PC-3 (cell line): ENCODE measurements at regions of chr5 and their contacts with region 1.

Region 1: DNA sequence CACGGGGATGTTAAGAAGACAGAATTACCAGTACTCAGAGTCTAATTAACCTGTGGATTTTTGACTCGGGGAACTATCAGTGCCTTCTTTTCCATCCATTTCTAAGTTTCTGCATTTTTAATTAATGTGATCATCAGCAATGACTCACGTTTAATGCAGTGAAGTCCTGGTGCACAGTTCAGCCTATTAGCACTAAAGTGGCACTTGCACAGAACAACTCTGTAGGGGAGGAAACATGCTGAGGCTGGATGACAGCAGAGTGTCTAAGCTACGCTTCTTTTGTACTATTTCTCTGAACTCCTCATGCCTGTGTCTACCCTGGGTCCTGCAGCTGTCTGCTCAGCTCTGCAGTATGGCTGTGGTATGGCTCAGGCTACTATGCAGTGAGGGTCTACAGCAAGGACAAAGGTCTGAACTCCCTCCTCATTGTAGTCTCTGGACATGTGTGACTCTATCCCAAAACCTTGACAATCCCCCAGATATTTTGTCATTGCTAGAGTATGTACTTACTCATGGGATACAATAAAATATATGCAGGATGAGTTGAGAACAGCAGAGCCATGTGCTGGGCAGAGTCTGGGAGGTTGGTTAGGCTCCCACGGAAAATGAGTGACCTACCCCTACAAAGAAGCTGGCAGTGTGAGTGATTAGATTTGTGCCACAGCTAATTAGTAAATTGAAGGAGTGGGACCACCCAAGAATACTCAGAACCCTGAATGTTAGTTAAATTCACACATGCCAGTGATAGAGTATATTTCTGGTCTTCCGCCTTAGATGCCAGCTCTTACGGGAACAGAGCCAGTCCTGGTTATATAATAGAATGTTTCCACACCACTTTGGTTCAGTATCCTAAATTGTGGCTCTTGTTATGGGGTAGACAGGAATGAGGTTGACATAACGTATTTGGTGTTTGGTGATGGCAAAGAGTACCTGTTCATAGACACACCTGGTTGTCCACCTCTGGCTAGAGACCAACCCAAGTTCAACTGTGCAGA is 148.0 kb downstream of the GHR start:
- DNase-seq: peak; percentile 50
- ATAC-seq: peak; percentile 93
- H3K4me3 ChIP-seq: no peak overlapping the region
- H3K27ac ChIP-seq: no peak overlapping the region
- H3K4me1 ChIP-seq: peaks cover 7% of the 10 kb centered on the region
- H3K27me3 ChIP-seq: no peaks in the 10 kb centered on the region
- CTCF ChIP-seq: no peak

Region 2: GRCh38 chr5:42216904-42217303 is 354.4 kb before region 1 on chr5:
- CTCF ChIA-PET with region 1: no interaction called
- POLR2A ChIA-PET with region 1: no interaction called
- intact Hi-C with region 1: no loop called
- DNase-seq: no peak
- ATAC-seq: no peak
- H3K4me3 ChIP-seq: no peak overlapping the region
- H3K27ac ChIP-seq: no peak overlapping the region
- H3K4me1 ChIP-seq: no peaks in the 10 kb centered on the region
- H3K27me3 ChIP-seq: no peaks in the 10 kb centered on the region
- CTCF ChIP-seq: no peak

Region 3: DNA sequence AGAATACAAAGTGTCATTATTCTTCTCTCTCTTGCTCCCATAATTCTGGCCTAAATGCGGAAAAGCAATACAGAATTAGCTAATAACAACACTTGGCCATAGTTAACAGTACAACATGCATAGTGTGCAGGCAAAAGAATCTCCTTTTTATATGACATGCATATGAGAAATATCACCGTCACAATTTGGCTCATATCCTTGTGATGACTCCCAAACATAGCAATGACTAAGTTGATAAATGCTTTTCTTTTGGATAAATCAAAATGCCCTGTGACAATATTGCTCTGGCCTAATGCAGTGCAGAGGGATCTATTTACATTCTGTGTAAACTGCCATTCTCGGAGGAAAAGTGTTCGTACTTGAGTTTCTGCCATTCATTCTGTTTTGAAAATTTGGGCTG is 269.9 kb before region 1 on chr5:
- CTCF ChIA-PET with region 1: no interaction called
- POLR2A ChIA-PET with region 1: no interaction called
- intact Hi-C with region 1: loop called (anchors 10 kb)
- DNase-seq: peak; percentile 98
- ATAC-seq: peak; percentile 90
- H3K4me3 ChIP-seq: peak overlapping the region; percentile 26
- H3K27ac ChIP-seq: peak overlapping the region; percentile 79
- H3K4me1 ChIP-seq: peaks cover 28% of the 10 kb centered on the region
- H3K27me3 ChIP-seq: no peaks in the 10 kb centered on the region
- CTCF ChIP-seq: no peak

Region 4: GRCh38 chr5:42500003-42500599 is 71.2 kb before region 1 on chr5:
- CTCF ChIA-PET with region 1: no interaction called
- POLR2A ChIA-PET with region 1: no interaction called
- intact Hi-C with region 1: loop called (anchors 2 kb)
- DNase-seq: peak; percentile 79
- ATAC-seq: peak; percentile 93
- H3K4me3 ChIP-seq: no peak overlapping the region
- H3K27ac ChIP-seq: peak overlapping the region; percentile 31
- H3K4me1 ChIP-seq: peaks cover 22% of the 10 kb centered on the region
- H3K27me3 ChIP-seq: no peaks in the 10 kb centered on the region
- CTCF ChIP-seq: no peak

Region 5: GRCh38 chr5:42547141-42547540 is 24.1 kb before region 1 on chr5:
- CTCF ChIA-PET with region 1: no interaction called
- POLR2A ChIA-PET with region 1: no interaction called
- intact Hi-C with region 1: no loop called
- DNase-seq: peak; percentile 92
- ATAC-seq: peak; percentile 100
- H3K4me3 ChIP-seq: no peak overlapping the region
- H3K27ac ChIP-seq: no peak overlapping the region
- H3K4me1 ChIP-seq: peaks cover 10% of the 10 kb centered on the region
- H3K27me3 ChIP-seq: no peaks in the 10 kb centered on the region
- CTCF ChIP-seq: no peak

Region 6: DNA sequence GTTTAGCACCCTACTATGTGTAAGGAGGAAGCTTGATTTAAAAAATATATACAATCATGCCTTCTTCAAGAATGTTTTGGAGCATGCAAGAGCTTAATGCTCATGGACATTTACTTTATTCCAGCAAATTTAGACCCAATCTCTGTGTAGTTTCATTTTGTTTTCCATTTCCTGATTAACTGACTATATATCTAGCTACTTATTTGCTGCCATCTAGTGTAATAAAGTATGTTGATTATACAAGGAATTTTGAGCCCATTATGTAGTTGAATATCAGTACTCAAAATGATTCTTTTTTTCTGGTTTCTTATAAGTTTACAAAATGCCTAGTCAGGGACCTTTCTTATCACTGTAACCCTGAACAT is 85.4 kb after region 1 on chr5:
- CTCF ChIA-PET with region 1: no interaction called
- POLR2A ChIA-PET with region 1: no interaction called
- intact Hi-C with region 1: no loop called
- DNase-seq: peak; percentile 58
- ATAC-seq: peak; percentile 80
- H3K4me3 ChIP-seq: peak overlapping the region; percentile 44
- H3K27ac ChIP-seq: no peak overlapping the region
- H3K4me1 ChIP-seq: peaks cover 7% of the 10 kb centered on the region; the same call in 1 of the 2 replicates
- H3K27me3 ChIP-seq: no peaks in the 10 kb centered on the region
- CTCF ChIP-seq: peak; percentile 76